Activated CD4-positive, alpha-beta memory T cell treated with anti-CD3 and anti-CD28 coated beads for 36 hours (primary cell): ENCODE measurements at regions of chr3 and their contacts with region 1.

Region 1: GRCh38 chr3:149129326-149130205 is at the start of gene HPS3:
- DNase-seq: peak; percentile 89
- H3K4me3 Mint-ChIP-seq: peak within 1 kb of the TSS; percentile 97
- H3K27ac Mint-ChIP-seq: peak within 1 kb of the TSS; percentile 79
- H3K4me1 Mint-ChIP-seq: peaks cover 39% of the 10 kb centered on the region
- H3K27me3 Mint-ChIP-seq: peaks cover 4% of the 10 kb centered on the region
- total RNA-seq, gene HPS3: 23.0 to 25.2 TPM

Region 2: DNA sequence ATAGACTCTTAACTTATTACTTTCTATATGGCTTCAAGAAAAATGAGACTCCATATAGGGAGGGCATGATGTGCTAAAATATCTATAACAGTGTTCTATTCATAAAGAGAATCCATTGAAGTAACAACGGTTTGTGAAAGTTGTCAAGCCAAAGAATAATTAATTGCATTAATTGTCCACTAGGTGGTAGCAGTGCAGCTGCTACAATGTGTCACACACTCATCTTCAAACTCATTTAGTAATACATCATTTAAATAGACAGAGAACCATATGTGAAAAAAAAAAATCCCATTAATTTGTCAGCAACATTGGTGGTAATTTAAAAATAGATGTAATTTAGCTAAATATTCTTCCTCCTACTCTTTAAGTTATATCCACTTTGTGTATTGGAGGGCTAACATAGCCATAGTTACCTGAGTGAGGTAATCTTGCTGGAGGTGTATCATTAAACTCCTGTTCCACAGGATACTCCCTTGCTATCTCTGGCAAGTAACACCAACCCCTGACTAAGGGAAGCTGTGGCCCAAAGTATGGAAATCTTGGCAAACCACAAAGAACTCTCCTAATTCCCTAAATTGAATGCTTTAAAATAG is 268.2 kb before region 1 on chr3:
- CTCF ChIA-PET with region 1: no interaction called
- POLR2A ChIA-PET with region 1: no interaction called
- intact Hi-C with region 1: loop called (anchors 10 kb)
- DNase-seq: no peak
- H3K4me3 Mint-ChIP-seq: no peak overlapping the region
- H3K27ac Mint-ChIP-seq: no peak overlapping the region
- H3K4me1 Mint-ChIP-seq: no peaks in the 10 kb centered on the region
- H3K27me3 Mint-ChIP-seq: peaks cover 15% of the 10 kb centered on the region

Region 3: DNA sequence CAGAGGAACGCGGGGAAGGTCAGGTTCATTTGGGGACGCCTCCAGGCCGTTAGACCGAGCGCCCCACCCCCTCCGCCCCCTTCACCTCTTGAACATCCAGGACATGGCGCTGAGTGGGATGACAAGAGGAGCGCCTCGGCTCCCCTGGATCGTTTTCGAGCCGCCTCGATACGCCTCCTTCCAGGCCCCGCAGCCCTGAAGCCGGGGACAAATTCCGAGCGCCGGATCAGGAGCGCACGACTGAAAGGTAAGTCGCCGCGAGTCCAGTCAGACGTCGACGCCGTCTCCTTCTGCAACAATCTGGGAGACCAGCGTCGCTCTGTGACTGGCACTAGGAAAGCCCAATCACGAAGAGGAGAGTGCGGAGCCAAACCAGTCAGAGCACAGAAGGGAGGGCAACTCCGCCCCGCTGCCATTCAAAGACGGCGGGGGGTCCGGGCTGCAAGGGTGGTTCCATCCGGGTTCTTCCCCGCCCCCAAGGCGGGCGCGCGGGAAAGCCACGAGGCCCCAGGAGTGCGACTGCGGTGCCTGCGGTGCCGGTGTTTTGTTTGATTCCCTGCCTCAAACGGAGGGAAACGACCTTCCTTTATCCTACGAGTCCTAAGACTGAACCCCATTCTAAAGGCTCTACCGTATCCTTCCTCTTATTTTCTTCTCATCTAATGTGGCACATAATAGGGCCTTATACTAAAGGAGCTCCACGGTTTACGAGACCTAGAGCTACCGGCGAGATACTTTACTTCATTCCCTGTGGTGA is 43.2 kb before region 1 on chr3 and contains the start of gene HLTF:
- CTCF ChIA-PET with region 1: no interaction called
- POLR2A ChIA-PET with region 1: no interaction called
- intact Hi-C with region 1: loop called (anchors 1 kb)
- DNase-seq: peak; percentile 93
- H3K4me3 Mint-ChIP-seq: peak within 1 kb of the TSS; percentile 95
- H3K27ac Mint-ChIP-seq: peak within 1 kb of the TSS; percentile 56
- H3K4me1 Mint-ChIP-seq: peaks cover 16% of the 10 kb centered on the region
- H3K27me3 Mint-ChIP-seq: no peaks in the 10 kb centered on the region
- total RNA-seq, gene HLTF: 22.3 to 25.1 TPM

Region 4: DNA sequence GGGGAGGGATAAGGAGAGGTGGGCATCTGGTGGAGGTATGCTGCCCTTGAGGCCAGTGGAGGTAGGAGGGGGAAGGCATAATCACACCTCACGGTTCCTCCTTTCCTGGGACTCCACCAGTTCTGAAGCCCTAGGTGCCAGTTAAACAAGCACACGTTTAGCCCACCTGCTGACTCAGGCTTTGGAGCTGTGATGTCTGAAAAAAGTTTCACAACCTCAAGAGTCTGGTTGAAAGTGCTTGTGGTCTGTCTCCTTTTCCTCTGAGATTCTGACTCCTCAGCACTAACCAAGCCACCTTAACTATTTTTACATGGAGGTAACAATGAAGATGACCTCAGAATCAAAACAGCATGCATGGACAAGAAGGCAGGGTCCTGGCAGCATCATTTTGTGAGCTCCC is 22.9 kb after region 1 on chr3:
- CTCF ChIA-PET with region 1: no interaction called
- POLR2A ChIA-PET with region 1: no interaction called
- intact Hi-C with region 1: loop called (anchors 1 kb)
- DNase-seq: peak; percentile 33
- H3K4me3 Mint-ChIP-seq: no peak overlapping the region
- H3K27ac Mint-ChIP-seq: no peak overlapping the region
- H3K4me1 Mint-ChIP-seq: peaks cover 13% of the 10 kb centered on the region
- H3K27me3 Mint-ChIP-seq: no peaks in the 10 kb centered on the region

Region 5: DNA sequence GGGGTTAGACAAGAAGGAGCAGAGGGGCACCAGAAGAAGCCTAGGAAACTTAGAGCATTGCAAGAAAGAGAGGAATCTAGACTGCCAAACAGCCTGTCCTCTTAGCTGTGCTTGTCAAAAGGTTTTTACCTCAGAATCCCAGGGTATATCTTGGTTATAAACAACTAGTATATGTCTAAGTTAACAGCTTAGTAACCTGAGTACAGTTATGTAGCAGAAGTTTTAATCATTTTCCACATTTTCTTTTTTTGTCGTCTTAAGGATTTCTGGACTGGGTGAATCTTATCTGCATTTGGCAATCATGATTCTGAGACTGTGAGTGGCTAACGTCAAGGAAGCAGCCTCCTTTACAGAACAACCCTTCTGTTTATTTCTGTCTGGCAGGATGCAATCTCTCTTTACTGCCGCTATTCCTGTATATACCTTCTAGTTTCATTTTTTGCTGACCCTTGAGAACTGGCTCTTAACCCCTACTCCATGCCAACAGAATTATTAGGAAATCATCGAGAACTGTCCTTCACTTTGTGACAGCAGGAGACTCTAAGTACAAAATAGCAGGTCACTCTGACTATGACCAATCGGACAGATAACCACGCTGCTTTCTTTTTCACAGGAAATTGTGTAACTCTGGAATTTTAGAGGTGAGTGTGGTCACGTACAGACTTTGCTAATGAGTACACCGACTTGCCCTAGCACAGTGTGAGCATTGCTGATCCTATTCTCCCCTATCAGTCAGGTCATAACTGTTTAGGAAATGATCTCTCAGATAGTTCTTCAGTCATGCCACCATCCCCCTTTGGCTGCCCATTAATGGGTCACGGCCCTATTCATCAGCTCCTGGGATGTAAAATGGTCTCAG is 95.4 kb after region 1 on chr3:
- CTCF ChIA-PET with region 1: interaction called, 3 read pairs
- POLR2A ChIA-PET with region 1: no interaction called
- intact Hi-C with region 1: loop called (anchors 1 kb)
- DNase-seq: peak; percentile 46
- H3K4me3 Mint-ChIP-seq: peak overlapping the region; percentile 64
- H3K27ac Mint-ChIP-seq: peak overlapping the region; percentile 48
- H3K4me1 Mint-ChIP-seq: peaks cover 21% of the 10 kb centered on the region
- H3K27me3 Mint-ChIP-seq: peaks cover 3% of the 10 kb centered on the region

Region 6: GRCh38 chr3:149273096-149273751 is 143.7 kb after region 1 on chr3:
- CTCF ChIA-PET with region 1: interaction called, 6 read pairs
- POLR2A ChIA-PET with region 1: no interaction called
- intact Hi-C with region 1: loop called (anchors 2 kb)
- DNase-seq: peak; percentile 26
- H3K4me3 Mint-ChIP-seq: no peak overlapping the region
- H3K27ac Mint-ChIP-seq: no peak overlapping the region
- H3K4me1 Mint-ChIP-seq: peaks cover 9% of the 10 kb centered on the region
- H3K27me3 Mint-ChIP-seq: no peaks in the 10 kb centered on the region